Activated CD8-positive, alpha-beta T cell treated with anti-CD3 and anti-CD28 coated beads, Interleukin-2, amount 10 ng/mL, durations not matched to agents 7 days and 5 days (primary cell): ENCODE measurements at regions of chr16 and their contacts with region 1.

Region 1: GRCh38 chr16:71499775-71500364 is 10.7 kb upstream of the ZNF19 start:
- DNase-seq: peak; percentile 68
- ATAC-seq: peak; percentile 60
- H3K4me3 Mint-ChIP-seq: no peak overlapping the region
- H3K27ac Mint-ChIP-seq: no peak overlapping the region
- H3K4me1 Mint-ChIP-seq: no peaks in the 10 kb centered on the region
- H3K27me3 Mint-ChIP-seq: peaks cover under 1% of the 10 kb centered on the region

Region 2: DNA sequence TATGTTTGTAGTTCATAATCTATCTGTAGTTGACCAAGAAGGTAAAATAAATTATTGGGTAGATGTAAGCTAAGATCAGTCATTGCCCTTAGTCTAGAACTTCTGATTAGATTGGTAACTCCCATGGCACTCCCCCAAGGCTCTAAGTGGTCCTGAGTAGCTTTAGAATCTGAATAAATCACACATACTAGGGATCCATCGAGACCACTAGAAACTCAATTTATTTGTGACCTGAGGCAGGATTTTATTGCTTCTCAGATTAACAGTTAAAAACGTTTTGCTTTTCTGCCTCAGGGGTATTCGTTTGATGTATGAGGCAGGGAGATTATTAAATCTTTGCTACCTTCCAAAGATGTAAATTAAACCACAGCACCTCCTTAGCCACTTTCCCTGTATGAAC is 235.6 kb before region 1 on chr16:
- CTCF ChIA-PET with region 1: no interaction called
- POLR2A ChIA-PET with region 1: no interaction called
- DNase-seq: no peak
- ATAC-seq: no peak
- H3K4me3 Mint-ChIP-seq: no peak overlapping the region
- H3K27ac Mint-ChIP-seq: no peak overlapping the region
- H3K4me1 Mint-ChIP-seq: no peaks in the 10 kb centered on the region
- H3K27me3 Mint-ChIP-seq: peaks cover 17% of the 10 kb centered on the region

Region 3: GRCh38 chr16:71412270-71413160 is 87.4 kb before region 1 on chr16:
- CTCF ChIA-PET with region 1: interaction called, 98 read pairs
- POLR2A ChIA-PET with region 1: interaction called, 4 read pairs
- DNase-seq: peak; percentile 77
- ATAC-seq: peak; percentile 80
- H3K4me3 Mint-ChIP-seq: no peak overlapping the region
- H3K27ac Mint-ChIP-seq: no peak overlapping the region
- H3K4me1 Mint-ChIP-seq: peaks cover 13% of the 10 kb centered on the region
- H3K27me3 Mint-ChIP-seq: peaks cover 27% of the 10 kb centered on the region

Region 4: DNA sequence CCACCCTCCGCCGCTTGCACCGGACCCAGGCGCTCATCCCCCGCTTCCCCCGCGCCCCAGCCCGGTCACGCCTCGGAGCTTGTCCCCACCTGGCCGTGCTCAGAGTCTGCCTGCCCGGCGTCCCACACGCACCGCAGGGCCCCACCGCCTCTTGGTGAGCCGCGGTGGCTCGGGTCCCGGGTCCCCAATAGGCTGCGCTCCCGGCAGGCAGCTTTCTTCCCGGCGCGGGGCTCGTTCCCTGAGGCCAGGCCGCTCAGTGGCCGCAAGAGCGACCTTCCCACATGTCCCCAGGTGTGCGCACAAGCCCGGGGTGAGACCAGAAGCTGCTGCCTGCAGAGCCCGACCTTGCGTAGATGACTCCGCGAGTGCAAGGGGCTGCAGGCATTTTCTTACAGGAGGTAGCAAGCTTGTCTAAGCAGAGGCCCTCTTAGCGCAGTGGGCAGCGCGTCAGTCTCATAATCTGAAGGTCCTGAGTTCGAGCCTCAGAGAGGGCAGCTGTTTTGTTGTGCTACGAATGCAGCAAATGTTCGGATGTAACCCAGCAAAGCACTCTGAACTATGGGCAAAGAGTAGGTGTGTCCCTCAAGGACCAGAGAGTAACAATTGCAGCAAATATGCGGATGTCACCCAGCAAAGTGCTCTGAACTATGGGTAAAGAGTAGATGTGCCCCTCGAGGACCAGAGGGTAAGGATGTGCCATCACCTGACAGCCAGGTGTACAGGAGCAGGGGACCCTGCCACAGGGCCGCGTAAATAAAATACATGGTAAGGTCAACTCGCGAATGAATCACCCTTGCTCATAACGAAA is 73.6 kb before region 1 on chr16:
- CTCF ChIA-PET with region 1: interaction called, 10 read pairs
- POLR2A ChIA-PET with region 1: no interaction called
- DNase-seq: peak; percentile 61
- ATAC-seq: peak; percentile 80
- H3K4me3 Mint-ChIP-seq: peak overlapping the region; percentile 28
- H3K27ac Mint-ChIP-seq: no peak overlapping the region
- H3K4me1 Mint-ChIP-seq: peaks cover 6% of the 10 kb centered on the region
- H3K27me3 Mint-ChIP-seq: peaks cover 32% of the 10 kb centered on the region

Region 5: DNA sequence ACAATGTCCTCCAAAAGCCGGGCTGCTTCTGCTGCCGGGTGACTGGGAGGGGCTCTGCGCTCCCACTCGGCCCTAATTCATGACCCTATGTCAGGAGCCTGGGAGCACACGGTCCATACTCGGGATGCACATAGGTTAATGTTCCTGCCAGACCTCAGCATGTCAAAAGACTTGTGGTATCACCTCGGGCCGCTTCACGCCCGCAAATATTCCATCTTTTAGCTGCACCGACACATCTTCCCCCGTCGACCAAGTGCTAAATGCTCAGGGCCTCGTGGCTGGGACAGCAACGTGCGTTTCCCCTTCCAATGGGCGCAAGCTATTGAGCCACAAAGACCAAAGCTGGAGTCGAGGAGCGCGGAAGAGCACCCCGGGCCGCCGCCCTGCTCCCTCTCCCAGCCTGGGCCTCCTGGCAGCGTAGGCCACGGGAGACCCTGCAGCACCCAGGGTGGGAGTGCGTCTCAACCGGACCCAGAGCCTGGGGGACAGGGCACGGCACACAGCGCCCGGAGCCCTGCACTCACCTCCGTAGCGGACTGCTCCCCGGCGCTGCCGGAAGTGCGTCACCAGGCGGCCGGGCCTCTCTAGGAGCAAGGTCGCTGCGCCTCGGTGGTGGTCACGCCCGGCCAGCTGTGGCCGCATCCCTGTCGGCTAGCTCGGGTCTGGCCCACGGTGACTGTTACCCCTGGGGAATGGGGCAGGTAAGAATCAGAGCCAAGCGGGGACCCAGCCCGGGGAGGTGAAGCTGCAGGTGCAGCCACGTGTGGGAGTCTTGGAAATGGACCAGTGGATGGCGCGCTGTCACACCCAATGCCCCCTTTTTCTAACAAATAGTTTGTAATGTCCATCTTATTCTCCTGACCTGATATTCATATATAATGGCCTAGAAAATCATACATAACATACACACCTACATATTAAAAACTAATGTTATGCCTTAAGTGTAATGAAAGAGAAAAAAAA is 37.9 kb before region 1 on chr16 and contains the start of gene ZNF23:
- CTCF ChIA-PET with region 1: interaction called, 14 read pairs
- POLR2A ChIA-PET with region 1: no interaction called
- DNase-seq: peak; percentile 82
- ATAC-seq: peak; percentile 98
- H3K4me3 Mint-ChIP-seq: peak within 1 kb of the TSS; percentile 86
- H3K27ac Mint-ChIP-seq: peak within 1 kb of the TSS; percentile 89
- H3K4me1 Mint-ChIP-seq: peaks cover 22% of the 10 kb centered on the region
- H3K27me3 Mint-ChIP-seq: no peaks in the 10 kb centered on the region
- total RNA-seq, gene ZNF23: 7.9 to 8.7 TPM

Region 6: DNA sequence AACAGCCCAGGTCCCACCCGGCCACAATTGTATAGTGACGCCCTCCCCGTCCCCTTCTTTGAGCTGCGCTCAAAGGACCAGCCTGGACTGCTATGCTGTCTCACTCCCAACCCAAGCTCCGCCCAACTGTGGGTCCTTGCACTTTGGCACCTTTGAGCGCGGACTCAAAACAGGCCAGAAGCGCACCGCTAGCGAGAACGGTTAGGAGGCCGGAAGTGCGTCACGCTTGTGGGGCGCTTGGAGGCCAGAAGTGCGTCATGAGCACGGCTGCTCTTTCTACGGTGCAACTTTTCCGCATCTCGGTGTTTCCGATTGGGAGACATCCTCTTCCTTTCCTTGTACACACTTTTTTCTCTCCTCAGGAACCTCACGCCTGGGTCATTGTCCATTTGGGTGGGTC is 10.7 kb before region 1 on chr16 and contains the start of gene ZNF19:
- CTCF ChIA-PET with region 1: interaction called, 12 read pairs
- POLR2A ChIA-PET with region 1: no interaction called
- DNase-seq: no peak
- ATAC-seq: no peak
- H3K4me3 Mint-ChIP-seq: no peak within 1 kb of the TSS
- H3K27ac Mint-ChIP-seq: no peak within 1 kb of the TSS
- H3K4me1 Mint-ChIP-seq: peaks cover 6% of the 10 kb centered on the region
- H3K27me3 Mint-ChIP-seq: peaks cover 8% of the 10 kb centered on the region
- total RNA-seq, gene ZNF19: 2.7 TPM